ENCODE measurements at regions of chr16 and their contacts with region 1.

Region 1: DNA sequence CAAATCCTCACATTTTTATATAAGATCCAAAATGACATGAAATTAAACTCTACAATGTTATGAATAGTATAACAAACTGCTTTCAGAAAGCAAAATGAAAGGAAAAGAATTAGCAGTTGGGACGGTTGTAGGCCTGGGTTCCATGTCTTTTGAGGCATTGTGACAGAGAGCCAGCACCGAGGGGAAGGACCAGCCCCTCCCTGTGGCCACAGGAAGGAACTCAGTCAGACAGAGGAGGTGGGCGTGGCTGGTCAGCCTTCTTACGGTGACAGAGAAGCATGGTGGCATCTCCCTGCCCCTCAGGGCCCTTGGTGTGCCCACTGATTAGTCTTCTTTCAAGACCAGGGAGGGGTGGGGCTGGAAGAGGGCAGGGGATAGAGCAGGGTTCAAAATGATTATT is 5.7 kb downstream of the ZNF319 start:
- DNase-seq: peak in 2 of 5 donors; percentile 22 to 57
- H3K4me3 ChIP-seq: no peak overlapping the region
- H3K27ac ChIP-seq: no peak overlapping the region
- H3K4me1 ChIP-seq: peaks cover 3 to 25% (median 5%) of the 10 kb centered on the region in 3 donors
- H3K27me3 ChIP-seq: no peaks in the 10 kb centered on the region
- CTCF ChIP-seq: no peak

Region 2: DNA sequence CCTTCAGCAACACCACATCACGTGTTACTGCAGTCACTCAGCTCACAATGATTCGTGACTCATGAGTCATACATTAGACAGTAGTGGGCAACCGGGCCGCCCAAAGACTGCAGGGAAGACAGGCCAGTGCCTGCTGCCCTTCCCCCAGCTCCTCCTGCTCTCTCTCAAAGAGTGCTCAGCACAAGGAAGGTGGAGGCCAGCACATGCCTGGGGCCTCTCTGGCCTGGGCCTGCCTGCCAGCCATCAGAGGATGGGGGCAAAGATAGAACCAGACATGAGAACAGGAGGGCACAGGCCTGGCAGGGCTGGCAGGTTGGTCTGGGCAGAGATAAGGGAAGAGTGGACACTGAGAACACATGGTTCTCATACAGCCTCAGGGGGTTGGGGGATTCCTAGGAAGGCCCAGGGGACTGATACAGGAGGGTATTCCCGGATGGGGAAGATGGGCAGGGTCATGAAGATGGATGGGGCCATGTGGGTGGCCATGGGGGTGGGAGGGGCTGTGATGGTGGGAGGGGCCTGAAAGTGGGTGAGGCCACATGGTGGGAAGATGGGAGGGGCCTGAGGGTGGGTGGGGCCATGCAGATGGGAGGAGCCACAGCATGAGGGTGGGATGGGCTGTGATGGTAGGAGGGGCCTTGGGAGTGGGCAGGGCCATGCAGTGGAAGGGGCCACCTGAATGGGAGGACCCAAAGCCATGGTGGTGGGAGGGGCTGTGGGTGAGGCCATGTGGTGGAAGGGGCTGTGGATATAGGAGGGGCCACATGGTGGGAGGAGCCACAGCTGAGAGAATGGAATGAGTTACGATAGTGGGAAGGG is 230.2 kb before region 1 on chr16:
- intact Hi-C with region 1: loop called (anchors 10 kb)
- DNase-seq: peak in 2 of 5 donors; percentile 70 to 85
- H3K4me3 ChIP-seq: no peak overlapping the region
- H3K27ac ChIP-seq: no peak overlapping the region
- H3K4me1 ChIP-seq: no peaks in the 10 kb centered on the region
- H3K27me3 ChIP-seq: no peaks in the 10 kb centered on the region
- CTCF ChIP-seq: no peak

Region 3: DNA sequence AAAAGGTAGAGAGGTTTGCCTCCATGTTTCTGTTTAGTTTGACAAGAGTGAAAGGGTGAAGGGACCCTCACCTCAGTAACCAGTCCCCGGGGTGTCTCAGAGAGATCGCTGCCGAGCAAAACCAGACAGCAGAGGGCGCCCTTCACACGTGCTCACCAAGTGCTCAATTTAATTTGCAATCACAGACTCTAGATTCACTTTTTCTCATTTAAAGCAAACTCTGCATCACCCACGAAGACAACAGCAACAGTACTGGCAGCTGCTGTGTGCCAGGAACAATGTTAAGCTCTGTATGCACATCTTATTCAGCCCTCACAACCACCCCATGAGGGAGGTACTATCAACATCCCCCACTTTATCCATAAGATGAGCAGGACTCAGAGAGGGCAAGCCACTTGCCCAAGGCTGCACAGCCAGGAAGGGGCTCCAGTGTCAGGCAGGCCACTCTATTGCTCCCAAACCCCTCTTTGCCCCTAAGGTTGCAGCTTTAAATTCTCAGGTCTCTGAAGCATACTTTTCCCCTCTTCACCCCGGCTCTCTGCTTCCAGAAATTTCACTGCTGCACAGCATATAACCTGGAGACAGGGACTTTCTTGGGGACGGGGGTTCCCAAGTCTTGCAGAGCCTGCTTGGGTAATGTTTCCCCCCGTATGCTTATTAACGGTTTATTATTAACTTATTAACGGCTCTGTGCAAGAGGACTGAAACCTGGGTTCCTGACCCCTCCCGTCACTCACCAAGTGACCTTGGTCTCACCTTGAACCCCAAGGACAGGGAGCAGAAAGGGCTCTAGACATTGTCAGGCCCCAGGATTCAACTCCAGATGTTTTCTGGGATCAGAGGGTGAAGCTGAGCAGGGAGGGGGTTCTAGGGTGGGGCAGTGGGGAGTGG is 94.8 kb before region 1 on chr16:
- intact Hi-C with region 1: loop called (anchors 5 kb)
- DNase-seq: peak; percentile 3 to 81 (median 75)
- H3K4me3 ChIP-seq: no peak overlapping the region
- H3K27ac ChIP-seq: no peak overlapping the region
- H3K4me1 ChIP-seq: peaks cover 0 to 2% (median 0%) of the 10 kb centered on the region in 3 donors
- H3K27me3 ChIP-seq: no peaks in the 10 kb centered on the region
- CTCF ChIP-seq: peak; percentile 79

Region 4: DNA sequence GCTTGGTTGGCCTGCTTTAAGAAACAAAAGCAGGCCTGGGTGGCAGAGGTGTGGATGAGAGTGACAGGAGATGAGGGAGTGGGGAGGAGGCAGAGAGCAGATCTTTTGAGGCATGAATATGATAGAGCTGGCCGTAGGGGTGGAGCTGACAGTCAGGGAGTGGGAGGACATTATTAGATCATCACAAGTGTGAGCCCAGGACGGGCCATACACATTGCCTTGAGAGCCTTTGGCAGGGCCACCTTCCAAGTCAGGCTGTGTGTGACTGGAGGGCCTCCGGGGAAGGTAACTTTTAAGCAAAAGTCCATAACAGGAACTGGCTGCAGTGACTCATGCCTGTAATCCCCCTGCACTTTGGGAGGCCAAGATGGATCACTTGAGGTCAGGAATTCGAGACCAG is 423.8 kb after region 1 on chr16:
- intact Hi-C with region 1: no loop called
- DNase-seq: no peak
- H3K4me3 ChIP-seq: no peak overlapping the region
- H3K27ac ChIP-seq: no peak overlapping the region
- H3K4me1 ChIP-seq: no peaks in the 10 kb centered on the region
- H3K27me3 ChIP-seq: no peaks in the 10 kb centered on the region
- CTCF ChIP-seq: no peak